ENCODE measurements at regions of chr12 and their contacts with region 1.

Region 1: DNA sequence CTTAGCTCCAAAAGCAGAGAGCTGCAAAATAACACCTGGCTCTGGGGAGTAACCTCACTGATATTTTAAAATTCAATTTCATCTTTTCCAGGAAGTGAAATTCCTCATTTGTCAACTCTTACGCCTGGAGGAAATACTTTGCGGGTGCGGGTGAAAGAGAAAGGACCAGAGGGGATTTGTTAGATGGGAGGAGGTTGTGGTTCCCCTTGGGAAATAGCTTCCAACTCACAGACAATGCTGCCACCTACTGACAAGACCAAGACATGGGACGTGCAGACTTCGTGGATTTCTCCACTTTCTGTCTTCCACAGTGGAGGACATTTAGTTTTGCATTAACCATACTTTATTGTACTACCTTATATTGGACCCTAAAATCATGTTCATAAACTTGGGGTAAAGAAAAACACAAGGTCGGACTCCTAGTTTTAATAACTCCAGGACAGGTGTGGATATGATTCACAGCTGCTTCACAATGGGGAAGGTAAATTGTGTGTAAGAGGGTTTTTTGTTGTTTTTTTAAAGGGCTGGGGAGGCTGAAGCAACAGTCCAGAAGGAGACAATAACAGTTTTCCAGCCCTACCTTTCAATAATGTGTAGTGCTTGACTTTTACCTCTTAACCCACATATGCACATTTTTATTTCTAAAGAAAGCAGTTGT is 10.8 kb downstream of the FBXL14 start:
- DNase-seq: peak in 1 of 3 donors; percentile 42
- ATAC-seq: peak; percentile 79 to 82
- H3K4me3 ChIP-seq: peak overlapping the region; percentile 51
- H3K27ac ChIP-seq: no peak overlapping the region
- H3K4me1 ChIP-seq: peaks cover 1% of the 10 kb centered on the region
- H3K27me3 ChIP-seq: no peaks in the 10 kb centered on the region

Region 2: DNA sequence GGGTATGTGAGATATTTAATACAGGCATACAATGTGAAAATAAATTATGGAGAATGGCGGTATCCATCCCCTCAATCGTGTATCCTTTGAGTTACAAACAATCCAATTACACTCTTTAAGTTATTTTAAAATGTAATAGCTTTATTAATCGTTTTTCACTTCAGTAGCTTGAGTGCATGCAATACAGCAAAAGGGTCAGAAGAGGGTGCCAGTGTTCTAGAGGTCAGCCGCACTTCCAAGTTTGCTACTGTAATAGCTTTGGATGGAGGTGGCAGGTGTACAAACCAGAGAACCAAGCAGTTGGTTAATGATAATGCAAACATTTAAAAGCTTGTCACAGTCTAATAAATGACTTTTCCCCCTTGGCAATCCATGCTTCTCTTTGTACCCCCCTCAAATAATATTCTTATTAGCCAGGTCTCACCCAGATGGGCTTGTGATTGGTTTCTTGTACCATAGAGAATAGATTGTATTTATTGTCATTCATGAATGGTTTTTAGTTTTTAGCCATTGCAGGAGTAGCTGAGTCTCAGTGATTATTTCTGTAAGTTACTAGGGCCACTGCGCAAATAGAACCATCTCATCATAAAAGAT is 465.5 kb before region 1 on chr12:
- intact Hi-C with region 1: loop called (anchors 5 kb)
- DNase-seq: peak; percentile 55 to 84 (median 64)
- ATAC-seq: peak; percentile 64
- H3K4me3 ChIP-seq: no peak overlapping the region
- H3K27ac ChIP-seq: no peak overlapping the region
- H3K4me1 ChIP-seq: no peaks in the 10 kb centered on the region
- H3K27me3 ChIP-seq: no peaks in the 10 kb centered on the region

Region 3: DNA sequence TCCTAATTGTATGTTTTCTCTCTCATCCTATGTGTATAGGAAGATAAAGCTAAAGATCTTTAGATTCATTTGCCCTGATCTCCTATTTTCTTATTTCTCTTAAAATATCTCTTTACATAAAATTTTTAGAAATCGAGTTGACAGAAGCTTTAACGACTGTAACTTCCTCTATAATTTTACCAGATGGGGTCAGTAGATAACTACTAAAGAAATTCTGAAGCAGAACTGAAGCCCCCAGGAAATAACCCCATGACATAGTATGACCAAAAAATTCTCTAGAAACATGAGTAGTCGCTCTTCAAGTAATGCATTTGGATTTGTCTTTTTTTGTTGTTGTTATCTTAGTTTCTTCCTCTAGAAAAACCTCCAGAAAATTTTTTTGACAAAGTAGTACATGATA is 304.5 kb before region 1 on chr12:
- intact Hi-C with region 1: loop called in 1 of 4 experiments (anchors 10 kb)
- DNase-seq: no peak
- ATAC-seq: no peak
- H3K4me3 ChIP-seq: no peak overlapping the region
- H3K27ac ChIP-seq: no peak overlapping the region
- H3K4me1 ChIP-seq: peaks cover 2% of the 10 kb centered on the region
- H3K27me3 ChIP-seq: no peaks in the 10 kb centered on the region

Region 4: GRCh38 chr12:1289371-1290155 is 294.0 kb before region 1 on chr12:
- intact Hi-C with region 1: loop called in 1 of 4 experiments (anchors 10 kb)
- DNase-seq: no peak
- ATAC-seq: peak; percentile 41 to 58
- H3K4me3 ChIP-seq: no peak overlapping the region
- H3K27ac ChIP-seq: no peak overlapping the region
- H3K4me1 ChIP-seq: no peaks in the 10 kb centered on the region
- H3K27me3 ChIP-seq: no peaks in the 10 kb centered on the region